Sigmoid colon (tissue), 7 donors: ENCODE measurements at regions of chr3 and their contacts with region 1.

Region 1: DNA sequence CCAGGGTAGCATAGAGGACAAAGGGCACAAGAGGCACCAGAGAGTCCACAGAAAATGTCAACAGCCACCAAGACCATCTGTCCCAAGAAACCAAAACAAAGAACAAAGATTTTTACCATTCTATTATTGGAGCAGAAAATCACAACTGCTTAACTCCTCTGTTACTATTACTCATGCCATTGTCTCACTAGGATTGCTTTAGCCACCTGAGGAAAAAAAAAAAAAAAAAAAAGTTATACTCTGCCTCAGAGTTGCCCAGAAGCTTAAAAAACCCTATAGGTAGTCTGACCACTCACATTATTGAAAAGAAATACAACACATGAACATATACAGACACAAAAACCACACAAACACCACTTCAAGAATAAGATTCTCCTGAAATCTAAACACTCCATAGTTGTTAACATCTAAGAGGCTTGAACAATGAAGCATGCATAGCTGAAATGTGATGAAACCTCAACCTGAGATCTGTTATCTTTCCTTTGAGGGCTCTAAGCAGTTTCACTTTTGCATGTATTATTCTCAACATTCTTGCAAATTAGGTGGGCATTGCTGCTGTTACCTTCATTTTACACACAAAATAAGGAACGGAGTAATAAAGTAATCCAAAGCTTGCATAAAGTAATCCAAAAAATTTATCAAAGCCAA is 85.4 kb downstream of the IGSF11 start:
- DNase-seq: no peak
- H3K4me3 ChIP-seq: no peak overlapping the region
- H3K27ac ChIP-seq: no peak overlapping the region
- H3K4me1 ChIP-seq: peaks cover 0 to 5% (median 0%) of the 10 kb centered on the region in 4 donors
- H3K27me3 ChIP-seq: no peaks in the 10 kb centered on the region
- CTCF ChIP-seq: no peak
- EP300 ChIP-seq: no peak
- POLR2A ChIP-seq: no peak

Region 2: DNA sequence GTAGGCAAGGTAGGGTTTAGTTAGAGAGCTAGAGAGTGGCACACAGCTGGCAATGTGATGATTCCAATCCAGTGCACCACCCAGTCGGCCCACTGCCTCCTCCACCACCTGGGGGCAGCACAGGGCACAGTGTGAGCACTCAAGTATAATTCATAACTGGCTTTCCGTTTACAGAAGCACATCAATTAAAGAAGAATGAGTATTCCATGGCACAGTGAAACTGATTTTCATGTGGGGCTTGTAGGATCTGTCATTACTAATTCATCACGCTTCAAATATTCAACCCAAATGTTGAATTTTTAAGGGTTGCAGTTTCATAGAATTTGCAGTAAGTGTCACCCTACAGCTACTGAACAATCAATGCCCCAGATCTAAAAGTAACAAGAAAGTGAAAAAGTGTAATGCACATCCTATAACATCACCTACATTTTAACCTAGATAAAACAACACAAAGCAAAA is 64.5 kb before region 1 on chr3:
- intact Hi-C with region 1: loop called (anchors 5 kb)
- DNase-seq: no peak
- H3K4me3 ChIP-seq: no peak overlapping the region
- H3K27ac ChIP-seq: no peak overlapping the region
- H3K4me1 ChIP-seq: no peaks in the 10 kb centered on the region
- H3K27me3 ChIP-seq: no peaks in the 10 kb centered on the region
- CTCF ChIP-seq: peak; percentile 69 to 87 (median 84)
- EP300 ChIP-seq: no peak
- POLR2A ChIP-seq: no peak

Region 3: DNA sequence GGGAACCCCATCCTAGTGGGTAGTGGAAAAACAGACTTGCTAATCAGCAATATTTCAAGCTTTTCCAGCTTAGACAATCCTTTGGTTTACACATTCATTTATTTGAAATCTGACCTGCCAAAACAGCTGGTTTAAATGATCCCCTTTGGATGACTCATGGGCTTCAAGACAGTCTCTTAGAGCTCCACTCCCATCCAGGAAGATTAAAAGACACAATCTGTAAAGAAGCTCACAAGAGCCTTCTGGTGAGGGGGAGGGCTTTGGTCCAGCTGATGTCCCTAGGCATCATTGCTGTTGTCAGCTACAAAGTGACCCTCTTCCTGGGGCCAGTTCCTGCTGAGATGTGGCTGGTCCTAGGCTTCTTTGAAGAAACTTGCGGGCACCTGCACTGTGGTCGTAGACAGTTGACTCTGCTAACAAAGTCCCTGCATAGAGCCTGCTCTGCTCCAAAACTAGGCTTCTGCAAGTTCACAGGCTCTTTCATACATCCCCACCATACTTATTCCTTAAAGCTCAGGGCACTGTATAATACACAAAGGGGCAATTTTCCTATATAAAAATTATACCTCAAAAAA is 11.7 kb after region 1 on chr3:
- intact Hi-C with region 1: loop called (anchors 1 kb)
- DNase-seq: no peak
- H3K4me3 ChIP-seq: no peak overlapping the region
- H3K27ac ChIP-seq: no peak overlapping the region
- H3K4me1 ChIP-seq: no peaks in the 10 kb centered on the region
- H3K27me3 ChIP-seq: no peaks in the 10 kb centered on the region
- CTCF ChIP-seq: no peak
- EP300 ChIP-seq: no peak
- POLR2A ChIP-seq: no peak